Calu3 (cell line): ENCODE measurements at regions of chr11 and their contacts with region 1.

Region 1: DNA sequence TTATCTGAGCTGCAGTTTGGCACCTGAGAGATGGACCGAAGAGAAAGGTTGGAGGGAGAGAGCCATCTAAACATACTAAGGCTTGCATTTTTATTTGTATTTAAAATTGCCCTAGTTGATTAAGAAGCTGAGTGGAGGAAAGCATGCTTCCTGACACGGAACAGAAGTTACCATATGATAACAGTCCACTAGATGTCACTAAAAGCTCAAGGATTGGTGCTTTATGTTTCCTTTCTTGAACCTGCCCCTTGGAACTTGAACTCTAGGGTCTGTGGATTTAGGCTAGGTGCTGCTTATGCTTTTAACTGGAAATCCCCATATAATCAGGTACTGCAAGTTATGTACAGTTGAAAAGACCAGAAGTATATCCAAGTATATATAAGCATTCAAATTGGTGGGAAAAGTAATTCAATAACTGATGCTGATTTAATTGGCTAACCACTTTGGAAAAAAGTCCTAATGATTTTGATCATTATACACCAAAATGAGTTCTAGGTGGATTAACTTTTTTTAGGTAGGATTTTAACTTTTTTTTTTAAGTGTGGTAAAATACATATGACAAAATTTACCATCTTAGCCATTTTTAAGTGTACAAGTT is 9.5 kb downstream of the RBMXL2 start:
- DNase-seq: peak; percentile 9
- H3K4me3 Mint-ChIP-seq: no peak overlapping the region
- H3K27ac Mint-ChIP-seq: no peak overlapping the region
- H3K4me1 Mint-ChIP-seq: no peaks in the 10 kb centered on the region
- H3K27me3 Mint-ChIP-seq: peaks cover 52% of the 10 kb centered on the region
- CTCF ChIP-seq: peak; percentile 54

Region 2: GRCh38 chr11:6924122-6924521 is 174.2 kb before region 1 on chr11:
- CTCF ChIA-PET with region 1: no interaction called
- intact Hi-C with region 1: no loop called
- DNase-seq: no peak
- H3K4me3 Mint-ChIP-seq: no peak overlapping the region
- H3K27ac Mint-ChIP-seq: no peak overlapping the region
- H3K4me1 Mint-ChIP-seq: no peaks in the 10 kb centered on the region
- H3K27me3 Mint-ChIP-seq: peaks cover 25% of the 10 kb centered on the region
- CTCF ChIP-seq: no peak

Region 3: GRCh38 chr11:7278314-7278917 is 180.1 kb after region 1 on chr11:
- CTCF ChIA-PET with region 1: interaction called, 5 read pairs
- intact Hi-C with region 1: loop called (anchors 2 kb)
- DNase-seq: peak; percentile 40
- H3K4me3 Mint-ChIP-seq: no peak overlapping the region
- H3K27ac Mint-ChIP-seq: no peak overlapping the region
- H3K4me1 Mint-ChIP-seq: peaks cover 8% of the 10 kb centered on the region
- H3K27me3 Mint-ChIP-seq: peaks cover 58% of the 10 kb centered on the region
- CTCF ChIP-seq: peak; percentile 32

Region 4: GRCh38 chr11:7353100-7353499 is 254.8 kb after region 1 on chr11:
- CTCF ChIA-PET with region 1: interaction called, 3 read pairs
- intact Hi-C with region 1: loop called (anchors 10 kb)
- DNase-seq: peak; percentile 49
- H3K4me3 Mint-ChIP-seq: no peak overlapping the region
- H3K27ac Mint-ChIP-seq: no peak overlapping the region
- H3K4me1 Mint-ChIP-seq: no peaks in the 10 kb centered on the region
- H3K27me3 Mint-ChIP-seq: peaks cover 61% of the 10 kb centered on the region
- CTCF ChIP-seq: peak; percentile 65

Region 5: GRCh38 chr11:7688238-7688826 is 590.0 kb after region 1 on chr11:
- CTCF ChIA-PET with region 1: no interaction called
- intact Hi-C with region 1: loop called (anchors 1 kb)
- DNase-seq: peak; percentile 22
- H3K4me3 Mint-ChIP-seq: no peak overlapping the region
- H3K27ac Mint-ChIP-seq: no peak overlapping the region
- H3K4me1 Mint-ChIP-seq: peaks cover 7% of the 10 kb centered on the region
- H3K27me3 Mint-ChIP-seq: peaks cover 25% of the 10 kb centered on the region
- CTCF ChIP-seq: peak; percentile 80